Left colon (tissue), 2 donors: ENCODE measurements at regions of chr1 and their contacts with region 1.

Region 1: GRCh38 chr1:178282949-178283367 is 189.1 kb downstream of the RASAL2 start:
- DNase-seq: no peak
- ATAC-seq: peak; percentile 42

Region 2: GRCh38 chr1:178031856-178032320 is 251.1 kb before region 1 on chr1:
- intact Hi-C with region 1: loop called in 1 of 2 experiments (anchors 10 kb)
- DNase-seq: peak; percentile 84 to 90
- ATAC-seq: peak; percentile 97

Region 3: DNA sequence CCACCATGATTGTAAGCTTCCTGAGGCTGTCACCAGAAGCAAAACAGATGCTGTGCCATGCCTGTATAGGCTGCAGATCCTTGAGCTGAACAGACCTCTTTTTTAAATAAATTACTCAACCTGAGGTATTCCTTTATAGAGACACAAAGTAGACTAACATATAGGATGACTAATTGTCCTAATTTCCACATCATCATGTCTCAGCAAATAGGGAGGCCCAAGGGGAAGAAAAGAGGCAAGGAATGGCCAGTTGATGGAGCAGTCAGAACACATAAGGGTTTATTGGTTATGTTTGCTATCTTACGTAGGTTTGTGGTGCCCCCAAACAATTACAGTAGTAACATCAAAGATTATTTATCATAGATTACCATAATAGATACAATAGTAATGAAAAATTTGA is 62.9 kb before region 1 on chr1:
- intact Hi-C with region 1: no loop called
- DNase-seq: no peak
- ATAC-seq: no peak